Naive thymus-derived CD4-positive, alpha-beta T cell (primary cell): ENCODE measurements at regions of chr17 and their contacts with region 1.

Region 1: DNA sequence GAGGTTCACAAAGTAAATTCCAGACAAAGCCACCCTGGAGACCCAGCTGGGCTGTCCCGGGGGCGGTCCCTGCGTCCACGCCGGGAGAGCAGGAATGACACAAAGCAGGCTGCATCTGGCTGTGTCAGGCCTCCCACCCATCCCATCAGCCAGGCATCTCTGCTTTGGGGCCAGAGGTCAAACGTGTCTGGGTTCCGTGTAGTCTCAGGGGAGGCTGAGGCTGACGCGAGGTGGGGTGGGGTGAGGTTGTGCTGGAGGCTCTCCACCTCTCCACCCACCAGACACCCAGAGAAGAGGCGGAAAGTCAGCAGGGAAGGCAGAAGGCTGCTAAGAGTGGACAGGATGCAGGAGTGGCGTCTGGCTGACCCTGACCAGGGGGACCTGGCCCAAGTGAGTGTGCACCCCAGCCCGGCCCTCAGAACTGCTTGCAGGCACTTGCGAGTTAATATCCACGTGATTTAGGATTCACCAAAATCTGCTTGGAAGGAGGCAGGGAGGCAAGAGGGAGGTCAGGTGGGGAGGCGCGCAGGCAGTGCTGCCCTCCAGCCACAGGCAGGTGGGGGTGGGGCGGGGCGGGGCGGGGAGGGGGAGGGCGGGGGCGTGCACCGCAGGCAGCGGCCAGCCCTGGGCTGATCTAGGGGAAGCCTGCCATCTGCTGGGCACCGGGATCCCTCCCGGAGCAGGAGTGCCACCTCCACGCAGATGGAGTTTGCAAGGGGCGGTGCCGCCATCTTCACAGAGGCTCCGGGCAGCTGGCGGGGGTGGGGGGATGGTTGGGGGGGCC is 44.3 kb downstream of the TBC1D16 start:
- DNase-seq: peak; percentile 64 to 84 (median 79)
- ATAC-seq: peak; percentile 96
- H3K4me3 ChIP-seq: peak overlapping the region; percentile 56
- H3K4me3 Mint-ChIP-seq: peak overlapping the region; percentile 42 to 87 (median 78)
- H3K27ac ChIP-seq: peak overlapping the region; percentile 51
- H3K27ac Mint-ChIP-seq: peak overlapping the region in 8 of 9 donors; percentile 52 to 83 (median 62)
- H3K4me1 ChIP-seq: peaks cover 23 to 34% of the 10 kb centered on the region in 2 donors
- H3K4me1 Mint-ChIP-seq: peaks cover 22 to 45% (median 29%) of the 10 kb centered on the region in 7 donors
- H3K27me3 ChIP-seq: no peaks in the 10 kb centered on the region
- H3K27me3 Mint-ChIP-seq: peaks cover 0 to 4% (median 0%) of the 10 kb centered on the region in 5 donors

Region 2: DNA sequence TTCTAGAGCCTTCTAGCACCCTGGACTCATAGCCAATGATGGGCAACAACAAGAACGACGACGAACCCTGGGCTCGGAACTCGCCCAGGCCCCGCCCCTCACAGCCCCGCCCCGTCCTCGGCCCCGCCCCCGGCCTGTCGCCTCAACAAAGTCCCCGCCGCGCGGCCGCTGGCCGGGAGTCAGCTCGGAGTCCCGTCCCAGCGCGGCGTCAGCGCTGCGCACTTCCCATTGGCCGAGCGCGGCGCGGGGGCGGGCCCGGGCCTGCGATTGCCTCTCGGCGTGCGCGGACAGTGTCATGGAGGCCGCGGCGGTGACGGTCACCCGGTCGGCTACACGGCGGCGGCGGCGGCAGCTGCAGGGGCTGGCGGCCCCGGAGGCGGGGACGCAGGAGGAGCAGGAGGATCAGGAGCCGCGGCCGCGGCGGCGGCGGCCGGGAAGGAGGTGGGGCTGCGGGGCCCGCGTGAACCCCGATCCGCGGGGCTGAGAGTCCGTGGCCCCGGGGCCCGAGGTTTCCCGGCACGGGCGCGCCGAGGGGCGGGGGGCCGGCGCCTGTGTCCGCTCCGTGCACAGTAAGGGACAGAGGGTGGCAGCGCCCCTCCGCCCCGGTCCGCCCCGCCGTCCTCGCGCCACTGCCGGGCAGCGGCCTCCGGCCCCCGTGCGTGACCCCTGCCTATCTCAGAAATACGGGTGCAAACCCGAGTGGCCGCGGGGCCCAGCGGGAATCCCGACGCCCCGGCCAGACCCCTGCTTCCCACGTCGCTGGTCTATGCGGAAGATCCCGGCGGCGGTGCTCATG is 916.5 kb before region 1 on chr17 and contains the start of gene ENGASE:
- CTCF ChIA-PET with region 1: no interaction called
- POLR2A ChIA-PET with region 1: no interaction called
- intact Hi-C with region 1: loop called in 1 of 2 experiments (anchors 10 kb)
- DNase-seq: peak; percentile 78 to 97 (median 86)
- ATAC-seq: peak; percentile 99
- H3K4me3 ChIP-seq: peak within 1 kb of the TSS; percentile 64
- H3K4me3 Mint-ChIP-seq: peak within 1 kb of the TSS; percentile 85 to 95 (median 90)
- H3K27ac ChIP-seq: peak within 1 kb of the TSS; percentile 74
- H3K27ac Mint-ChIP-seq: peak within 1 kb of the TSS; percentile 64 to 94 (median 88)
- H3K4me1 ChIP-seq: peaks cover 8 to 14% of the 10 kb centered on the region in 2 donors
- H3K4me1 Mint-ChIP-seq: peaks cover 9 to 26% (median 18%) of the 10 kb centered on the region in 7 donors
- H3K27me3 ChIP-seq: no peaks in the 10 kb centered on the region
- H3K27me3 Mint-ChIP-seq: peaks cover 0 to 4% (median 0%) of the 10 kb centered on the region in 5 donors
- total RNA-seq, gene ENGASE: 41.5 to 214 (median 85.9) TPM

Region 3: DNA sequence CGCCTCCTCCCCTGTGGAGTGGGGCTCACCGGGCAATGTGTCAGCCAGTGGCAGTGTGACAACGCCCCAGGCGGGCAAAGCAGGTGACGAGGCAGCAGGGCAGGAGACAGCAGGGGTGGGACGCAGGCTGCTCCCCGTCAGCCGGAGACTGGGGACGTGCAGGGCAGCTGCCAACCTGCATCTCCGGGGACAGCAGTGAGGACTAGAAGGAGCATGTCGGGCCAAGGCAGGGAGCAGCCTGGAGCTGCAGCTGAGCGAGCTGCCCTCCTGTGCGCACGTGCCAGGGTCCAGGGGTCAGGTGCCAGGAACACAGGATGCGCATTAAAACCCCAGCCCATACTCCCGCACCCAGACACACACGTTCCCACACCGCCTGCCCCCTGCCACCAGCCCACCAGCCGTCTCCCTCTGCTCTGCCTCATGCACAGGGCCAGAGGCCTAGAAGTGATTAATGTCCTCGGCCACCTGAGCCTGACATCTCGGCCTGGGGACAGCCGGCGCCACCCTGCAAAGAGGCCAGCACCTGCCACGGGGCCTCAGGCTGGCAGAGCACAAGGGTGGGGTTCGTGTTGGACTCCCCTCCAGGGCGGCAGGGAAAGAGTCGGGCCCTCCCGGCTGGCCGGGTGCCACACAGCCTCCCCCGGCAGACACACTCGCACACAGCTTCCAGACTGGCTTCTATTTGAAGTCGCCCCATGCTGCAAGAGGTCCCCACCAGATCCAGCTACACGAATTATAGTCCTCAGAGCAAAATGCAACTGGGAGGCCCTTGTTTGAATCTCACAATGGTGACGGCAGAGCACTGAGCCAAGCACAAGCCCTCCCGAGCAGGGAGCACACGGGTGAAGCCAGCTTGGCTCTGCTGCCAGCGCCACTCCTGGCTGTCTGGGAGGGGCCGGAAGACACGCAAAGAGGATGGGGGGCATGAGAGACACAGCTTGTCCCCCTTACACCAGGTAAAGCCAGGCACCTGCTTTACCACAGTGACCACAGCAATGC is 470.9 kb before region 1 on chr17:
- CTCF ChIA-PET with region 1: no interaction called
- POLR2A ChIA-PET with region 1: no interaction called
- intact Hi-C with region 1: no loop called
- DNase-seq: no peak
- ATAC-seq: no peak
- H3K4me3 ChIP-seq: no peak overlapping the region
- H3K4me3 Mint-ChIP-seq: no peak overlapping the region
- H3K27ac ChIP-seq: no peak overlapping the region
- H3K27ac Mint-ChIP-seq: peak overlapping the region in 1 of 9 donors; percentile 33
- H3K4me1 ChIP-seq: no peaks in the 10 kb centered on the region
- H3K4me1 Mint-ChIP-seq: no peaks in the 10 kb centered on the region
- H3K27me3 ChIP-seq: no peaks in the 10 kb centered on the region
- H3K27me3 Mint-ChIP-seq: peaks cover 5 to 28% (median 19%) of the 10 kb centered on the region in 5 donors

Region 4: DNA sequence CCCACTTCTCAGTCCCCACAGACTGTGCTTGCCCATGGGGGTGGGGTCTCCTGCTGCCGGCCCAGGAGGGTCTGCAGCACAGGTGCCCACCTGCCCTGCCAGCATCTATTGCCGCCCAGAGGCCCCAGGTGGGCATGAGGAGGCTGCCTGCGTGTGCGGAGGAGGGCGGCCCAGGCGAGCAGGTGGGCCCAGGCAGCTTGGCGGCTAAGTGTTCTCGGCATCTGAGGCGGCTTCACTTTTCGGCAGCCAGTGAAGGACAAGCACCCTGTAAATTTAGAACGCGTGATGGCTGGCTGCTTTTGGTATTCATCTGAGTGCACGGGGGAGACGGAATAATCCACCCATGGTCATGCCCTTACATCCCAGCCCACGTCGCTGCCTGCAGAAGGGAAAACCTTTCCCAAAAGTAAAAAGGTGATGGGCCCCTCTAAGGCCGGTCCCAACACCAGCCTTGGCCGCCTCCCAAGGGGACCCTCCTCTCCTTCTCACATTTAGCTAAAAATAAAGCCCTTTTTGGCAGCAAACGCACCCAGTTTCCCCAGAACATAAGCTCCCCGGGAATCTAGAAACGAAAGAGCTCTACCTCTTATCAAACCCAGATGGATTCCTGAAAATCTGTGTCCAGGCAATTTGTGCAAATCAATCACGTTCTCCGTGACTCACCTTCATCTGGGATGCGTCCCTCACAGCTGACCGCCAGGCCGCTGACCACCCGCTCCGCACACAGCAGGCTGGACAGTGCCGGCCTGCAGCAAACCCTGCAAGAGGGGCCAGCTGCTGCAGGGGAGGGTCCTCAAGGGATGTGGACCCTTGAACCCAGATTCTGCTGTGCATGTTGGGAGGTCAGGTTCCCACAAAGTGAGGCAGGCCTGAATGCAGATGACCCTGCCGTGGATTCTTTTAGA is 459.9 kb before region 1 on chr17:
- CTCF ChIA-PET with region 1: no interaction called
- POLR2A ChIA-PET with region 1: no interaction called
- intact Hi-C with region 1: no loop called
- DNase-seq: no peak
- ATAC-seq: no peak
- H3K4me3 ChIP-seq: no peak overlapping the region
- H3K4me3 Mint-ChIP-seq: no peak overlapping the region
- H3K27ac ChIP-seq: no peak overlapping the region
- H3K27ac Mint-ChIP-seq: no peak overlapping the region
- H3K4me1 ChIP-seq: no peaks in the 10 kb centered on the region
- H3K4me1 Mint-ChIP-seq: peaks cover 0 to 3% (median 0%) of the 10 kb centered on the region in 7 donors
- H3K27me3 ChIP-seq: peaks cover 0 to 3% of the 10 kb centered on the region in 2 donors
- H3K27me3 Mint-ChIP-seq: peaks cover 0 to 37% (median 13%) of the 10 kb centered on the region in 5 donors

Region 5: DNA sequence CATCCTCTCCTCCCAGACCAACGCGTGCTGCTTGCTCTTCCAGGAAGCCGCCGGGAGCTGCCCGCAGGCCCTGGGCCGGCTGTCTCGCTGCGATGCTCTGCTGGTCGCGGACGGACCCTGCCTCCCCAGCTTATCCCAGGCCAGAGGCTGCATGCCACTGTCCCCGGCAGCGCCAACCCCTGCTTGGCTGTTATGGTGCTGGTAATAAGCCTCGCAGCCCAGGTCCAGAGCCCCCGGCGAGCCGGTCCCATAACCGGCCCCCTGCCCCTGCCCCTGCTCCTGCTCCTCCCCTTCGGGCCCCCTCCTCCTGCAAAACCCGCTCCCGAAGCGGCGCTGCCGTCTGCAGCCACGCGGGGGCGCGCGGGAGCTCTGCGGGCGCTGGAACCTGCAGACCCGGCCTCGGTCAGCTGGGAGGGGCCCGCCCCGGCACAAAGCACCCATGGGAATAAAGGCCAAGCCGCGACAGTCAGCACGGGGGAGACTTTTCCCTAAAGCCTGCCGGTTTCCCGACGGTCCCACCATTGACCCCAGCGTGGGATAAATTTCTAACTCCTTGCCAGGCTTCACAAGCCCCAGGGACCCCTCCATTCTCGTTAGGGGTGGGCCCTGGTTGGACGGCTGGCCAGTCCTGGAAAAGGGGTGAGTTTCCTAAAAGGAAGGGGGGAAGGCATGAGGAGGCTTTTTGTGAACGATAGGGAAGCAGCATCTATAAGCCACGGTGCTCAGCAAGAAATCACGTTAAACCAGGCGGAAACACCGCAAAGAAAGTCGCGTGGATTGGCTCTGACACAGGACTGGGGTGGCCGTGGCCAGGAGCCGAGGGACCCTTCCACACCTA is 249.4 kb before region 1 on chr17:
- CTCF ChIA-PET with region 1: interaction called, 11 read pairs
- POLR2A ChIA-PET with region 1: no interaction called
- intact Hi-C with region 1: loop called (anchors 1 to 2 kb)
- DNase-seq: peak; percentile 50 to 85 (median 73)
- ATAC-seq: peak; percentile 66
- H3K4me3 ChIP-seq: no peak overlapping the region
- H3K4me3 Mint-ChIP-seq: peak overlapping the region in 1 of 10 donors; percentile 16
- H3K27ac ChIP-seq: no peak overlapping the region
- H3K27ac Mint-ChIP-seq: peak overlapping the region in 2 of 9 donors; percentile 43 to 76
- H3K4me1 ChIP-seq: peaks cover 6 to 21% of the 10 kb centered on the region in 2 donors
- H3K4me1 Mint-ChIP-seq: peaks cover 0 to 24% (median 15%) of the 10 kb centered on the region in 7 donors
- H3K27me3 ChIP-seq: peaks cover 0 to 7% of the 10 kb centered on the region in 2 donors
- H3K27me3 Mint-ChIP-seq: peaks cover 18 to 40% (median 34%) of the 10 kb centered on the region in 5 donors

Region 6: DNA sequence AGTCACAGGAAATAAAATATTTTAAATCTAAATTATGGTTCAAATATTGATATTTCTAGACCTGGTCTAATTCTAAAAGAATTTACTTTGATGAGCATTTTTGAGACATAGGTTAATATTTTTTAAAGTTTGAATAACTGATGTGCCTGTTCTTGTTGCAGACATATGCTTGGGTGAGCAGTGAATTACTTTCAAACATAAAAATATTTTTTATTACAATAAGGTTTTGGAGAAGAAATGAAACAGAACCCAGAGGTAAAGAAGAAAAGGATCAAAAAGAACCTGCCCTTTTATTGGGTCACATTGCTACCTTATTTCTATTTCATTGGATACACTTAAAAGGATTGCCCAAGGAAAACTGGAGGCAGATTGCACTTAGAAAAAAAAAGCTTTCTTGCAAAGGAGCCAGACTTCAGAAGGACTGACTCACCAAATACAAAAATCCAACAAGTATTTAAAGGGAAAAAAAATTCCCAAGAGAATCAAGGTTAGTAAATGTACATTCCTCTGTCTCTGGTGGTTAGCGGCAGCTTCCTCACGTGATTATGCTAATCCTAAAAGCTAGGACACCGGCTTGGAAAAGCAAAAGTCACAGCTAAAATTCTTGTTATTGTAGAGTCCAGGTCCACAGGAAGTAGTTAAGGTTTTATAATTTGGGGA is 242.0 kb before region 1 on chr17:
- CTCF ChIA-PET with region 1: interaction called, 8 read pairs
- POLR2A ChIA-PET with region 1: no interaction called
- intact Hi-C with region 1: loop called in 1 of 2 experiments (anchors 1 kb)
- DNase-seq: no peak
- ATAC-seq: no peak
- H3K4me3 ChIP-seq: no peak overlapping the region
- H3K4me3 Mint-ChIP-seq: no peak overlapping the region
- H3K27ac ChIP-seq: no peak overlapping the region
- H3K27ac Mint-ChIP-seq: no peak overlapping the region
- H3K4me1 ChIP-seq: peaks cover 0 to 25% of the 10 kb centered on the region in 2 donors
- H3K4me1 Mint-ChIP-seq: peaks cover 0 to 28% (median 21%) of the 10 kb centered on the region in 7 donors
- H3K27me3 ChIP-seq: peaks cover 0 to 19% of the 10 kb centered on the region in 2 donors
- H3K27me3 Mint-ChIP-seq: peaks cover 34 to 60% (median 42%) of the 10 kb centered on the region in 5 donors

Region 7: GRCh38 chr17:79789534-79790353 is 201.6 kb before region 1 on chr17:
- CTCF ChIA-PET with region 1: interaction called, 3 read pairs
- POLR2A ChIA-PET with region 1: no interaction called
- intact Hi-C with region 1: loop called in 1 of 2 experiments (anchors 1 kb)
- DNase-seq: peak in 1 of 9 donors; percentile 60
- ATAC-seq: peak; percentile 63
- H3K4me3 ChIP-seq: no peak overlapping the region
- H3K4me3 Mint-ChIP-seq: peak overlapping the region in 6 of 10 donors; percentile 13 to 69 (median 32)
- H3K27ac ChIP-seq: no peak overlapping the region
- H3K27ac Mint-ChIP-seq: peak overlapping the region in 1 of 9 donors; percentile 48
- H3K4me1 ChIP-seq: peaks cover 11 to 21% of the 10 kb centered on the region in 2 donors
- H3K4me1 Mint-ChIP-seq: peaks cover 0 to 22% (median 12%) of the 10 kb centered on the region in 7 donors
- H3K27me3 ChIP-seq: peaks cover 6 to 21% of the 10 kb centered on the region in 2 donors
- H3K27me3 Mint-ChIP-seq: peaks cover 40 to 61% (median 58%) of the 10 kb centered on the region in 5 donors

Region 8: GRCh38 chr17:79844869-79845600 is 146.3 kb before region 1 on chr17:
- CTCF ChIA-PET with region 1: interaction called, 4 read pairs
- POLR2A ChIA-PET with region 1: interaction called, 9 read pairs
- intact Hi-C with region 1: loop called (anchors 1 to 5 kb)
- DNase-seq: peak in 7 of 9 donors; percentile 28 to 72 (median 42)
- ATAC-seq: peak; percentile 69
- H3K4me3 ChIP-seq: no peak overlapping the region
- H3K4me3 Mint-ChIP-seq: peak overlapping the region in 8 of 10 donors; percentile 12 to 95 (median 40)
- H3K27ac ChIP-seq: no peak overlapping the region
- H3K27ac Mint-ChIP-seq: no peak overlapping the region
- H3K4me1 ChIP-seq: peaks cover 39 to 44% of the 10 kb centered on the region in 2 donors
- H3K4me1 Mint-ChIP-seq: peaks cover 7 to 40% (median 26%) of the 10 kb centered on the region in 7 donors
- H3K27me3 ChIP-seq: peaks cover 15 to 30% of the 10 kb centered on the region in 2 donors
- H3K27me3 Mint-ChIP-seq: peaks cover 13 to 57% (median 29%) of the 10 kb centered on the region in 5 donors

Region 9: DNA sequence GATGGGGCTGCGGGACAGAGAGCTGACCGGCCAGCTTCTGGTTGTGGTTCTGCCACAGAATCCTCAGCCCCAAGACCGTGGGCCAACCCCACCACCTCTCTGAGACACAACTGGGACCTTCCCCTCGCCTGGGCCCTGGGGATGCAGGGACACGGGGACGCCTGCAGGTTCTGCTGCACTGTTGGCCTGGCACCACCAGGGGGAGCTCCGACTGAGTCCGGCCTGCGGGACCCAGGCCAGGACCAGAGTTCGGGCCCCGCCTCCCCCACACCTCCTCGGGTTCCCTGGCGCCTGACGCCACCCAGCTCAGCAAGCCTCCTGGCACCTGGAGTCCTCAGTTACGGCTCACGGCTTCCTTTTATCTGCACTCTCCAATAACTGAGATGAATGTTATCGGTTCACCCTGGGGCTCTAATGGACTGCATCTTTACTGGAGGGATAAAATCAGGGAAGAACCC is 17.1 kb after region 1 on chr17:
- CTCF ChIA-PET with region 1: interaction called, 11 read pairs
- POLR2A ChIA-PET with region 1: interaction called, 3 read pairs
- intact Hi-C with region 1: loop called in 1 of 2 experiments (anchors 2 kb)
- DNase-seq: peak; percentile 30 to 82 (median 63)
- ATAC-seq: peak; percentile 89
- H3K4me3 ChIP-seq: no peak overlapping the region
- H3K4me3 Mint-ChIP-seq: no peak overlapping the region
- H3K27ac ChIP-seq: no peak overlapping the region
- H3K27ac Mint-ChIP-seq: peak overlapping the region in 1 of 9 donors; percentile 20
- H3K4me1 ChIP-seq: peaks cover 0 to 3% of the 10 kb centered on the region in 2 donors
- H3K4me1 Mint-ChIP-seq: peaks cover 5 to 13% (median 8%) of the 10 kb centered on the region in 7 donors
- H3K27me3 ChIP-seq: no peaks in the 10 kb centered on the region
- H3K27me3 Mint-ChIP-seq: no peaks in the 10 kb centered on the region